Left cardiac atrium (tissue), 4 donors: ENCODE measurements at regions of chr1 and their contacts with region 1.

Region 1: DNA sequence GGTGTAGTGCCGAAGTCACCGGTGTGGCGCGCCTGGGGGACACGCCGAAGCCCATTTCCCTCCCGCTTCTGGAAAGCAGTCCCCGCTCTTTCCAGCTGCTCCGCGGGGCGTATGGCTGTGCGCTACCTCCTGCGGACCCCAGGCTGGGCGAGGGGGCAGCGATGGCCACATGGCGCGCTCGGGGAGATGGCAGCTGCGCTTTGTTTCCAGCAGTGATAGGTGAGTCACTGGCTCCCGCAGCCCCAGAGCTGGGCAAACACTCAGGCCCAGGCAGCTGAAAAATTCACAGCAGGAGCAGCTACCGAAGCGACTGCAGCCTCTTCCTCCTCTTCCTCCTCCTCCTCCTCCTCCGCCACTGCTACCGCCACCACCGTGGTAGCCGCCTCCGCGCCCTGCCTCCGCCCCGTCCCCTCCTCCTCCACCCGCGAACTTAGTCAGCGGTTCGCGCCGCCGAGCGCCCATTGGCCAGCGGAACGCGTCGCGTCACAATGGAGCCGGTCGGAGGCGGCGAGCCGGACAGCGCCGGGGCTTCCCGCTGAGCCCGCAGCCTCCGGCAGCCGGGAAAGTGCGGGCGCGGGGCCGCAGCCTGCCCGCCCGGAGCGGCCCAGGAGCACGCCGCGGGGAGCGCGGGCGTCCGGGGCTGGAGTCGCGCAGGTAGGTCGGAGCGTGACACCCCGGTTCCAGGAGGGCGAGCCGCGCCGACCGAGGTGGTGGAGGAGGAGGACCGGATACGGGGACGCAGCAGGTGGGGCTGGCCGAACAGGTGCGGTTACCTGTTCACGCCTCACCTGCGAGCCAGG is at the start of gene LRRC8B:
- DNase-seq: peak; percentile 95
- ATAC-seq: peak; percentile 99
- total RNA-seq, gene LRRC8B: 4.9 to 6.9 TPM

Region 2: GRCh38 chr1:89085781-89086180 is 438.8 kb before region 1 on chr1:
- intact Hi-C with region 1: no loop called
- DNase-seq: no peak
- ATAC-seq: peak in 1 of 2 donors; percentile 46

Region 3: DNA sequence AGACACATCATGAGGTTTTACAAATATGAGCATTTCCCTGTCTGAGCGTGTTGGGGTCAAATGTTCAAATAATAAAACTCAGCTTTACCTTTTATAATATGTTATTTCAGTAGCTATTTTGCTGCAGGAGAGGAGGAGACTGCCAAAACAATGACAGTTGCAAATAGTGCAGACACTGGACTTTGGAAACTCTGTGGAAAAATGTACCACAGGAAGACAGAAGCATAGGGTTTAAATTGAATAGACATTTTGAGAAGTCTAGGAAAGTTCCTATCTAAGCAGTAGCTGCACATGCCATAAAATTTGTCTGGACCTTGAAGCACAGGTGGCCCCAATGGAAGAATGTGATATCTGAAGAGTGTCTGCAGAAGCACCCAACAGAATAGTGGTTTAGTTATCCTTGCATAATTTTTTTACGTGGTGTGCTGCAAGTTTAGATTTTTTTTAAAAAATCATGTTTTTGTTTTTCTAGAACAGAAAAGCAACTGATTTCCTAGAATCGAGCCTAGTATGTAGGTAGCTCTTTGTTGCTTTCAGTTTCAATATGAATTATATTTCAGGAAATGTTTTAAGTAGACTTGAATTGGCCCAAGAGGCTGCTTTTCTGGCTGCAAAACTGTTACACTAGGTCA is 237.9 kb before region 1 on chr1:
- intact Hi-C with region 1: no loop called
- DNase-seq: no peak
- ATAC-seq: peak; percentile 15 to 25

Region 4: GRCh38 chr1:89605692-89606091 is 81.1 kb after region 1 on chr1:
- intact Hi-C with region 1: loop called (anchors 10 kb)
- DNase-seq: no peak
- ATAC-seq: no peak